Heart right ventricle (tissue), 16 donors: ENCODE measurements at regions of chr1 and their contacts with region 1.

Region 1: GRCh38 chr1:53285969-53286760 is 41.7 kb downstream of the LRP8 start:
- DNase-seq: no peak
- ATAC-seq: peak in 6 of 8 donors; percentile 45 to 80 (median 64)
- H3K4me3 ChIP-seq: no peak overlapping the region
- H3K27ac ChIP-seq: no peak overlapping the region
- H3K4me1 ChIP-seq: peaks cover 0 to 27% (median 4%) of the 10 kb centered on the region in 9 donors
- H3K27me3 ChIP-seq: no peaks in the 10 kb centered on the region
- CTCF ChIP-seq: no peak

Region 2: DNA sequence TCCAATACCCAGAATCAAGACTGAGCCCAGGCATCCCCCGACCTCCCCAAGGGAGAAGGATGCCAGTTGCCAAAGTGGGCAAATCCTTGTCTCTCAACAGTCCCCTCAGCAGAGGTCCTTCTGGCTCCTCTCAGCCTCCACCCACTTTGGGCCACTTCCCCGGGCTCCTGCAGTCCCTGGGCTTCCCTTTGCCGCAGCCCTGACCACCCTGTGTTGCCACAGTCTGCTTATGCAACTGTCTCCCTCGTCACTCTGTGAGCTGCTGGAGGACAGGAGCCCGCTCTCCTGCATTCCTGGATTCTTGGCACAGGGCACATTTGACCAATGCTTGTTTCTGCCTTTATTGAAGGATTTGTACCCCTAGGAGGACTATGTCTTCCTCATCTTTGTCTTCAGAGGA is 44.7 kb after region 1 on chr1:
- intact Hi-C with region 1: loop called in 1 of 10 experiments (anchors 2 kb)
- DNase-seq: no peak
- ATAC-seq: no peak
- H3K4me3 ChIP-seq: no peak overlapping the region
- H3K27ac ChIP-seq: no peak overlapping the region
- H3K4me1 ChIP-seq: peaks cover 7 to 24% (median 17%) of the 10 kb centered on the region in 9 donors
- H3K27me3 ChIP-seq: peaks cover 0 to 6% (median under 1%) of the 10 kb centered on the region in 7 donors
- CTCF ChIP-seq: no peak